Naive thymus-derived CD4-positive, alpha-beta T cell (primary cell): ENCODE measurements at regions of chr3 and their contacts with region 1.

Region 1: DNA sequence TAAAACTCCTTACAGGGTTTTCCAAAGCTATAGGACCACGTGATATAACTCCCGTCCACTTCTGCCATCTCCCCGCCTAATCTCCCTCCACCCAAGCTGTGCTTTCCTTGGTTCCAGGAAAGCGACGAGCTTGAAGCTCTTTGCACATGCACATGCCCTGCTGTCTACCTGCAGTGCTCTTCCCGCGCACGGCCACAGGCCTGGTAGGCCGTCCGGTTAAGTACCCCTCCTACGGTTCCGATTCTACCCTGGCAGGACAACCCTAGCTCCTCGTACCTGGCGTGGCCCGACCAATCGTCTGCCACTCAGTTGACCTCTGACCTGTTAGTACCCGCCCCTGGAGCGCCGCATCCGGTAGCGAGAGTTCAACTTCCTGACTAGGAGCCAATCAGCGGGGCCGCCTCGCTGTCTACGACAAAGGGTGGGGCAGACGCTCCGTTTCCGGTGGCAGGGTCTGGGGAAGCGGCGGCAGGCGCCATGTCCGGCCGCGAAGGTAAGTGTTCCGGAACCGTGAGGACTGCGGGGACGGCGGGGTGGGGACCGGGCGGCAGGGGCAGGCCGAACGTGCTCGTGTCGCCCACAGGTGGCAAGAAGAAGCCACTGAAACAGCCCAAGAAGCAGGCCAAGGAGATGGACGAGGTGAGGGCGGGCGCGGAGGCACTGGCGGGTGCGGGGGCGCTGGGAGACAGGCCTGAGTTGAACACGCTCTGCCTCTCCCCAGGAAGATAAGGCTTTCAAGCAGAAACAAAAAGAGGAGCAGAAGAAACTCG is at the starts of genes CCDC51 and TMA7:
- DNase-seq: peak; percentile 90 to 98 (median 96)
- ATAC-seq: peak; percentile 97
- H3K4me3 ChIP-seq: peak within 1 kb of the TSS; percentile 78
- H3K4me3 Mint-ChIP-seq: peak within 1 kb of the TSS; percentile 86 to 100 (median 94)
- H3K27ac ChIP-seq: peak within 1 kb of the TSS; percentile 93
- H3K27ac Mint-ChIP-seq: peak within 1 kb of the TSS; percentile 92 to 100 (median 98)
- H3K4me1 ChIP-seq: peaks cover 18 to 19% of the 10 kb centered on the region in 2 donors
- H3K4me1 Mint-ChIP-seq: peaks cover 16 to 50% (median 34%) of the 10 kb centered on the region in 7 donors
- H3K27me3 ChIP-seq: no peaks in the 10 kb centered on the region
- H3K27me3 Mint-ChIP-seq: no peaks in the 10 kb centered on the region
- total RNA-seq, gene CCDC51: 3.6 to 16.5 (median 5.0) TPM
- total RNA-seq, gene TMA7: 193 to 278 (median 236) TPM

Region 2: DNA sequence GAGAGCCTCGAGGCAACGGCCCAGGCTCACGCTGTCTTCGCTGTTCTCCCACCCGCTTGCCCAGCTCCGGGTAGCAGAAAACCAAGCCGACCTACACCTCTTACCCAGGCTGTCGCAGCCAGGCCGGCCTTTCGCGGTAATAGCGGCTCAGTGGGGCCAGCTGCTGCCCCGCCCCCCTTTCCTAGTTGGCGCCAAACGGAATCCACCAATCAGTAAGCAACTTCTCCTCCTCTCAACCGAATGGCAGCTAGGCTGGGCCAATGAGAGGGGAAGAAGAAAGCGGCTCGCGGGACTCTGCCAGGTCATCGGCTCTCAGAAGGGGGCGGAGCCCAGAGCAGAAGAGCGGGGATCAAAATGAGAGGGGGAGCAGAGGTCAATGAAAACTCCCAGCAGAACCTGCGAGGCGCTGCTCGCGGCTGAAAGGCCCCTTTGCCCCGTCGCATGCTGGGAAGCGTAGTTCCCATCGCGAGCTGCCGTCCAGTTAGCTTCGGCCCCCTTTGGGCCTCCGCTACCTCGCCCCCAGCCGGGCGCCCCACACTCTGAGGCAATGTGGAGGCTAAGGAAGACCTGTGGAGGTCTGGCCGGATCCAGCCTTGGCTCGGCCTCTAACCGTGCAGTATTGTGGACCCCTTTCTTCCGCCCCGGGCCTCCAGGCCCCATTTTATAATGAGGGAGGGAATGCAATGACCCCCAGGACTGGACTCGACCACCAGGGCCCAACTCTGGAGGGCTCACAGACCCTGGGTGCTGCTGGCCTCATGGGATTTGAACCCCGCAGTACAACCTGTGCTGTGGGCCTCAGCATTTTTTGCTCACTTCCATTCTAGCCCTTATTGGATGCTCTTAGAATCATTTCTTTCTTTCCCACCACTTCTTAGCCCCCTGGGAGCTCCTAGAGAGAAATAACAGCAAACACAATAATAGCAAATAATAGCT is 251.5 kb before region 1 on chr3 and contains the start of gene CDC25A:
- CTCF ChIA-PET with region 1: interaction called, 3 read pairs
- POLR2A ChIA-PET with region 1: interaction called, 3 read pairs
- intact Hi-C with region 1: loop called (anchors 1 to 2 kb)
- DNase-seq: peak; percentile 69 to 94 (median 87)
- ATAC-seq: peak; percentile 100
- H3K4me3 ChIP-seq: peak within 1 kb of the TSS; percentile 88
- H3K4me3 Mint-ChIP-seq: peak within 1 kb of the TSS; percentile 89 to 96 (median 94)
- H3K27ac ChIP-seq: peak within 1 kb of the TSS; percentile 57
- H3K27ac Mint-ChIP-seq: peak within 1 kb of the TSS in 8 of 9 donors; percentile 8 to 84 (median 66)
- H3K4me1 ChIP-seq: peaks cover 4 to 6% of the 10 kb centered on the region in 2 donors
- H3K4me1 Mint-ChIP-seq: peaks cover 6 to 36% (median 13%) of the 10 kb centered on the region in 7 donors
- H3K27me3 ChIP-seq: no peaks in the 10 kb centered on the region
- H3K27me3 Mint-ChIP-seq: peaks cover 0 to 21% (median 14%) of the 10 kb centered on the region in 5 donors
- total RNA-seq, gene CDC25A: 0.61 to 20.7 TPM in 2 of 5 experiments, not detected in the others

Region 3: DNA sequence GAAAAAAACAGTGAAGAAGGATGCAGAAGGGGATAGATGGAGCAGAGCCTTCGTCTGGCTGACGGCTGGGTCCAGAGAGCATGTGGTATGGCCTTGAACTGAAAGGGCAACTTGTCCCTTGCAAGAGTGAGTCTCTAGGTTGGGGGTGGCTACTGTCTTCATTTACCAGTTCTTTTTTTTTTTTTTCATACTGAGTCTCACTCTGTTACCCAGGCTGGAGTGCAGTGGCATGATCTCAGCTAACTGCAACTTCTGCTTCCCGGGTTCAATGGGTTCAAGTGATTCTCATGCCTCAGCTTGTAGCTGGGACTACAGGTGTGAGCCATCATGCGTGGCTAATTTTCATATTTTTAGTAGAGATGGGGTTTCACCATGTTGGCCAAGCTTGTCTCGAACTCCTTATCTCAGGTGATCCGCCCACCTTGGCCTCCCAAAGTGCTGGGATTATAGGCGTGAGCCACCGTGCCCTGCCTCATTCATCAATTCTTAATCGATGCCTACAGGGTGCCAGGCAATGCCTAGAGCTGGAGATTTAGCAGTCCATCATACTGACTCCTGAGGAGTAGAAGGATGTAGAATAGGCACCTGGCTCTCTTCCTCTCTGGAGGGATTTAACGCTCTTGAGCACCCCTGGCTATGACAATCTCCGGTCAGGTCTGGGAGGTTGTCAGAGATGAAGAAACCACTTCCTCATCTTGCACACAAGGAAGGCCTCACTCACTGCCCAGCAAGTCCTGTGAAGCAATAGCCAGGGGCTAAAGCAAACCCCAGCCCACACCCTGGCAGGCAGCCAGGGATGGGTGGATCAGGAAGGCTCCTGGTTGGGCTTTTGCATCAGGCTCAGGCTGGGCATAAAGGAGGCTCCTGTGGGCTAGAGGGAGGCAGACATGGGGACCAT is 217.1 kb before region 1 on chr3 and contains the start of gene CAMP:
- CTCF ChIA-PET with region 1: no interaction called
- POLR2A ChIA-PET with region 1: no interaction called
- intact Hi-C with region 1: no loop called
- DNase-seq: peak in 1 of 9 donors; percentile 36
- ATAC-seq: peak; percentile 89
- H3K4me3 ChIP-seq: no peak within 1 kb of the TSS
- H3K4me3 Mint-ChIP-seq: no peak within 1 kb of the TSS
- H3K27ac ChIP-seq: no peak within 1 kb of the TSS
- H3K27ac Mint-ChIP-seq: no peak within 1 kb of the TSS
- H3K4me1 ChIP-seq: no peaks in the 10 kb centered on the region
- H3K4me1 Mint-ChIP-seq: peaks cover 4 to 9% (median 6%) of the 10 kb centered on the region in 7 donors
- H3K27me3 ChIP-seq: no peaks in the 10 kb centered on the region
- H3K27me3 Mint-ChIP-seq: peaks cover 0 to 13% (median 4%) of the 10 kb centered on the region in 5 donors
- total RNA-seq, gene CAMP: 0.54 TPM in 1 of 5 experiments, not detected in the others

Region 4: DNA sequence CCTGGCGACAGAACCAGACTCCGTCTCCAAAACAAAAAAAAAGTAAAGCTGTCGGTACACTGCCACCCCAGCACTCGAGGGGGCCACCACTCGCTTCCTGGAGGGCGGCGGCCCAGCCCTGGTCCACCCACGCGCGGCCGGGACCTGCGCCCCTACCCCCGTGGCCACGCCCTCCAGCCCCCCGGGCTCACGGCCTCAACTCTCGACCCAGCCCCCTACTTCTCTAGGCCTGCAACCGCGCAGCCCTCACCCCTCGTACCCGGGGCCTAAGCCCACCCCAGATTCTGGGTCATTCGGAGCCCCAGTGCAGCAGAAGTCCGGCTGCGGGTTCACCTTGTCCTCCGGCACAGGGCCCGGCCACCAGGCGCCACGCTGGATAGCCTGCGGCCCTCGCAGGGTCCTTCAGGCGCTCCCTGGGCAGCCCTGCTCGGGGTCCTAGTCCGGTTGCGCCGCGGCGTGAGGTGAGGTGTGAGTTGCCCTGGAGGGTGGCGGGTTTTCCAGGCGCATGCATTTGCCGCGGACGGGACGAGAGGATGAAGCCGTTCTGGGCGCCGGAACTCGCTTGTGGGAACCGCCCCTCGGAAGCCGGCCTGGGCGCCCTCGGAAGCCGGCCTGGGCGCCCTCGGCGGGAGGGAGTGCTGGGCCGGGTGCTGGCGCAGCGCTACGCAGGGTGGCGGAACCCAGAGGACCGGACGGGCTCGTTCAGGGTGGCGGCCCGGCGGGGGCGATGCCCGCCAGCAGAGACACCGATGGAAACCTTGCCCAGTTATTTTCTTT is 138.8 kb before region 1 on chr3:
- CTCF ChIA-PET with region 1: interaction called, 8 read pairs
- POLR2A ChIA-PET with region 1: interaction called, 4 read pairs
- intact Hi-C with region 1: loop called in 1 of 2 experiments (anchors 1 kb)
- DNase-seq: peak; percentile 69 to 95 (median 81)
- ATAC-seq: peak; percentile 97
- H3K4me3 ChIP-seq: peak within 1 kb of the TSS; percentile 89
- H3K4me3 Mint-ChIP-seq: peak within 1 kb of the TSS; percentile 84 to 97 (median 91)
- H3K27ac ChIP-seq: peak within 1 kb of the TSS; percentile 96
- H3K27ac Mint-ChIP-seq: peak within 1 kb of the TSS; percentile 81 to 98 (median 94)
- H3K4me1 ChIP-seq: peaks cover 10 to 12% of the 10 kb centered on the region in 2 donors
- H3K4me1 Mint-ChIP-seq: peaks cover 26 to 47% (median 40%) of the 10 kb centered on the region in 7 donors
- H3K27me3 ChIP-seq: no peaks in the 10 kb centered on the region
- H3K27me3 Mint-ChIP-seq: peaks cover 0 to 13% (median 0%) of the 10 kb centered on the region in 5 donors

Region 5: DNA sequence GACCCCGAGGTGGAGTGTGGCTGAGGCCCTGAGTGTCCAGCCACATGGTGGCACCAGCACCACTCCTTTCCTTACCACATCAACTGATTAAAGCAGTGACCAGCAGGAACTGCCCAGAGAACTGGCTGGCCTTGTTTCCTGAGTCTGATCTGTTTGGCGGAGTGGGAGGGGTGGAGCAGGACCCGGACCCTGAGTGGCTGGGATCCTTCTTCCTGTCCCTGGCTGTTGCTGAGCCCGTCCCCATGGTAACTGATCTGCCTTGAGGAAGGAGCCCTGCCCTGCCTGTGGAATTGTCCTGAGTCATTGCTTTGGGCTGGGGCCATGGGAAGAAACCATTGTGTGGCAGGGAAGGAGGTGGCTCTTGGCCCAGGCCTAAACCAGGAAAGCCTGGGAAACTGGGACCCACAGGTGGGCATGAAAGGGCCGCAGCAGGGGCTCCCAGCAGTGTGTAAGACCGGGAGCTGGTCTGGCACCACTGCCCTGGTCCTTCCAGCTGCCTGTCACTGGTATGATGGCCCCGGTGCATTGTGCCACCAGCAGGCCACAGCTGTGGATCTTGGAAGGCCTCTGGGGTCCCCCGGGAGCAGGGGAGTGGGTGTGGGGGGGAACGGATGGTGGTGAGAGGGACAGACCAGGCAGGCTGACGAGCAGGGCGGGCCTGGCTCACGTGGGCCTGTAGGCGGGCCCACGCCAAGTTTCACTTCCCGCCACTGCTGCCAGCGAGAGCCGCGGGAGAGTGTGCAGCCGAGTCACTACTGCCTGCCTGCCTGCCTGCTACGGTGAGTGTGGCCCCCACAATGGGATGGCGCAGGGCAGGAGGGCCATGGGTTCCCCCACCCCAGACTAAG is 25.8 kb after region 1 on chr3:
- CTCF ChIA-PET with region 1: interaction called, 11 read pairs
- POLR2A ChIA-PET with region 1: interaction called, 22 read pairs
- intact Hi-C with region 1: loop called in 1 of 2 experiments (anchors 1 kb)
- DNase-seq: peak; percentile 64 to 84 (median 76)
- ATAC-seq: peak; percentile 91
- H3K4me3 ChIP-seq: peak overlapping the region; percentile 87
- H3K4me3 Mint-ChIP-seq: peak overlapping the region; percentile 87 to 98 (median 91)
- H3K27ac ChIP-seq: peak overlapping the region; percentile 95
- H3K27ac Mint-ChIP-seq: peak overlapping the region; percentile 89 to 99 (median 95)
- H3K4me1 ChIP-seq: peaks cover 41 to 53% of the 10 kb centered on the region in 2 donors
- H3K4me1 Mint-ChIP-seq: peaks cover 25 to 62% (median 57%) of the 10 kb centered on the region in 7 donors
- H3K27me3 ChIP-seq: no peaks in the 10 kb centered on the region
- H3K27me3 Mint-ChIP-seq: no peaks in the 10 kb centered on the region

Region 6: DNA sequence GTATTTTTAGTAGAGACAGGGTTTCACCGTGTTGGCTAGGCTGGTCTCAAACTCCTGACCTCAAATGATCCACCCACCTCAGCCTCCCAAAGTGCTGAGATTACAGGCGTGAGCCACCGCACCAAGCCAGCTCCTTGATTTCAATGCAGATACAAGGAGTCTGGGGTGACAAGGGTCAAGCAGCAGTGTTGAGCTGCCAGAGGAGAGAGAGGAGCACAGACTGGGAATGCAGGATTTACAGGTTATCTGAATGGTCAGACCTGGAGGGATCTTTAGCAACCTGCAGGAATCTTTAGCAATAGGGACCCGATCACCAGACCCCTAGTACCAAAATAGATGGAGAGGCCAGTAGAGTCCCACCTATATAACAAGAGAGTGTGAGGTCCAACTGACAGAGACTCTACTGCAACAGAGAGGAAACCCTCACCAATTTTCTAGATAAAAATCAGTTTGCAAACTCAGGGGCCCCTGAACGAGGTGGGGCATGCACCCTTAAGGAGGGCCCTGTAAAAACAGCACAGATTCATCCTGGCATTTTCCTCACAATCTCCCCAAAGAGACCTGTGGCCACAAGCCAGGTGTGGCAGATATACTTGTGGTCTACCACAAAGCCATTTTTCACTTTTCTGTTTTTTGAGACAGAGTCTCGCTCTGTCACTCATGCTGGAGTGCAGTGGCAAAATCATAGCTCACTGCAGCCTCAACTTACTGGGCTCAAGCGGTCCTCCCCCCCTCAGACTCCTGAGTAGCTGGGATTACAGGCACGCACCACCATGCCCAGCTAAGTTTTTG is 74.6 kb after region 1 on chr3:
- CTCF ChIA-PET with region 1: interaction called, 63 read pairs
- POLR2A ChIA-PET with region 1: interaction called, 15 read pairs
- intact Hi-C with region 1: no loop called
- DNase-seq: peak in 6 of 9 donors; percentile 48 to 67 (median 54)
- ATAC-seq: peak; percentile 66
- H3K4me3 ChIP-seq: peak overlapping the region; percentile 25
- H3K4me3 Mint-ChIP-seq: peak overlapping the region; percentile 62 to 82 (median 72)
- H3K27ac ChIP-seq: no peak overlapping the region
- H3K27ac Mint-ChIP-seq: peak overlapping the region; percentile 55 to 91 (median 78)
- H3K4me1 ChIP-seq: peaks cover 35 to 61% of the 10 kb centered on the region in 2 donors
- H3K4me1 Mint-ChIP-seq: peaks cover 48 to 85% (median 75%) of the 10 kb centered on the region in 7 donors
- H3K27me3 ChIP-seq: no peaks in the 10 kb centered on the region
- H3K27me3 Mint-ChIP-seq: no peaks in the 10 kb centered on the region

Region 7: GRCh38 chr3:49007068-49007770 is 567.2 kb after region 1 on chr3 and contains the start of gene WDR6:
- CTCF ChIA-PET with region 1: no interaction called
- POLR2A ChIA-PET with region 1: no interaction called
- intact Hi-C with region 1: loop called in 1 of 2 experiments (anchors 10 kb)
- DNase-seq: peak; percentile 86 to 98 (median 96)
- ATAC-seq: peak; percentile 95
- H3K4me3 ChIP-seq: peak within 1 kb of the TSS; percentile 96
- H3K4me3 Mint-ChIP-seq: peak within 1 kb of the TSS; percentile 94 to 100 (median 98)
- H3K27ac ChIP-seq: peak within 1 kb of the TSS; percentile 90
- H3K27ac Mint-ChIP-seq: peak within 1 kb of the TSS; percentile 95 to 100 (median 98)
- H3K4me1 ChIP-seq: peaks cover 8 to 16% of the 10 kb centered on the region in 2 donors
- H3K4me1 Mint-ChIP-seq: peaks cover 14 to 34% (median 28%) of the 10 kb centered on the region in 7 donors
- H3K27me3 ChIP-seq: no peaks in the 10 kb centered on the region
- H3K27me3 Mint-ChIP-seq: no peaks in the 10 kb centered on the region
- total RNA-seq, gene WDR6: 170 to 335 (median 204) TPM